ENCODE measurements at regions of chr14 and their contacts with region 1.

Region 1: DNA sequence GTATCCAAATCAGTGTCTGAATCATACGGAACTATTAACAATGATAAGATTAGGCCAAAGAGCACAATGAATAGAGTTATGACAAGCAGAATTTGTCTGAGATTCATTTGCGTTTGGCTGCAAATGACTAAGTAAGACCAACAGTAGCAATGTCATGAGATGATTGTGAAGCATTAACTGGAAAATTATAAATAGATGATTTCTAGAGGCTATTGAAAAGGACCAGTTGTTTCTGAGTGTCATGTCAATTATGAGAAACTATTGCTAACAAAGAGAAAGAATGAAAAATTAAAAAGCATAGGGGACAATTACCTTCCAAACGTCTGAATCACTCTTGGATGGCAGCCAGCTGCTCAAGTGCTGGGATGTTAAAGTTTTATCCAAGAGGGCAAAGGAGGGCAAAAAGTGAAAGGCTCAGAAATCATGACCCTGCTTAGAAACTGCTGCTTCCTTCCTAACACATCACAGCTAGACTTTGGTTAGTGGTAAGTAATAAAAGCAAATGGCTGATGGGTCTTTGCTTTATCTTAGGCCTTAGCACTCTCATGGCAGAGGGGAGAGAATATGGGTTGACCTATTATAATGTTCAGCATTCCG is 89.0 kb downstream of the AKAP6 start:
- DNase-seq: peak; percentile 60 to 66
- H3K4me3 ChIP-seq: no peak overlapping the region
- H3K27ac ChIP-seq: peak overlapping the region; percentile 72
- H3K4me1 ChIP-seq: peaks cover 28% of the 10 kb centered on the region
- H3K27me3 ChIP-seq: no peaks in the 10 kb centered on the region
- CTCF ChIP-seq: no peak

Region 2: GRCh38 chr14:32167907-32168306 is 250.1 kb before region 1 on chr14:
- CTCF ChIA-PET with region 1: no interaction called
- POLR2A ChIA-PET with region 1: no interaction called
- intact Hi-C with region 1: no loop called
- DNase-seq: no peak
- H3K4me3 ChIP-seq: no peak overlapping the region
- H3K27ac ChIP-seq: no peak overlapping the region
- H3K4me1 ChIP-seq: no peaks in the 10 kb centered on the region
- H3K27me3 ChIP-seq: no peaks in the 10 kb centered on the region
- CTCF ChIP-seq: no peak

Region 3: GRCh38 chr14:32397861-32398640 is 20.0 kb before region 1 on chr14:
- CTCF ChIA-PET with region 1: no interaction called
- POLR2A ChIA-PET with region 1: no interaction called
- intact Hi-C with region 1: loop called (anchors 2 kb)
- DNase-seq: peak; percentile 38 to 84
- H3K4me3 ChIP-seq: no peak overlapping the region
- H3K27ac ChIP-seq: peak overlapping the region; percentile 30
- H3K4me1 ChIP-seq: peaks cover 14% of the 10 kb centered on the region
- H3K27me3 ChIP-seq: no peaks in the 10 kb centered on the region
- CTCF ChIP-seq: no peak